ENCODE measurements at regions of chr3 and their contacts with region 1.

Region 1: DNA sequence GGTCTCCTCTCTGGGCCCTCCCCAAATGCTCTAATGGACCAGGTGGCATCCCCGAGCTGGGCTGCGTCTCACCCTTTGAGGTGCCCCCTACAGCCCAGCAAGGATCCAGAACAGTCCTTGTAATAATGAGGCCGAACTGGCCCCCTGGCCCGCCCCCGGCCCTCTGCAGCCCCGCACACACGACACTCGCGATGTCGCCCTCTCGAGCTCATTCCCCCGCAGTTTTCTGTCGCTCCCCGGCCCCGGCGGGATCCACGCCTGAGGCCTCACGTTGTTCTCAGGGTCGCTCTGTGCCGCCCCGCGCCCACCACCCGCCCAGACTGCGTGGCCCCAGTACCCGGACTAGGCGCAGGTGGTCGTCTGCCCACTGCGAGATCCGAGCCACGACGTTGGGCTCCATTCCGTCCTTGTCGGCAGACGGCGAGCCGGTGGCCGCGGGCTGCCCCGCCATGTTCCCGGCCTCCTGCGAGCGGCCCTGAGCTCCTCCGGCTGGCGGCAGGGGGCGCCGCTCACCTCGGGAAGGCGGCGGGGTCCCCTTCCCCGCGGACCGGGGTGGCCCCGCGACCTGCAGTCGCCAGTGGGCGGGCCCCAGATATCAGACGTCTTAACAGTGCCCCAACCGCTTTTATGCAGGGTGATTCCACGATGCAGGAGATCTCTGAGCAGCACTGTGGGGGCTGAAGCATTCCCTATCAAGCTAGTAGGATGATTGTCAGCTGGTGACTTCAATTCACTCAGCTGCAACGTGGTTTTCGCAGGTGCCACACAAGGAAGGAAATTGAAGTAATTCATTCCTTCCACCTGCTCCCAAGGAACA is at the start of gene C3orf33:
- DNase-seq: peak; percentile 75
- H3K4me3 Mint-ChIP-seq: peak within 1 kb of the TSS; percentile 81
- H3K27ac Mint-ChIP-seq: peak within 1 kb of the TSS; percentile 15
- H3K4me1 Mint-ChIP-seq: peaks cover 10% of the 10 kb centered on the region
- H3K27me3 Mint-ChIP-seq: peaks cover 14% of the 10 kb centered on the region
- total RNA-seq, gene C3orf33: 0.48 to 0.86 TPM

Region 2: DNA sequence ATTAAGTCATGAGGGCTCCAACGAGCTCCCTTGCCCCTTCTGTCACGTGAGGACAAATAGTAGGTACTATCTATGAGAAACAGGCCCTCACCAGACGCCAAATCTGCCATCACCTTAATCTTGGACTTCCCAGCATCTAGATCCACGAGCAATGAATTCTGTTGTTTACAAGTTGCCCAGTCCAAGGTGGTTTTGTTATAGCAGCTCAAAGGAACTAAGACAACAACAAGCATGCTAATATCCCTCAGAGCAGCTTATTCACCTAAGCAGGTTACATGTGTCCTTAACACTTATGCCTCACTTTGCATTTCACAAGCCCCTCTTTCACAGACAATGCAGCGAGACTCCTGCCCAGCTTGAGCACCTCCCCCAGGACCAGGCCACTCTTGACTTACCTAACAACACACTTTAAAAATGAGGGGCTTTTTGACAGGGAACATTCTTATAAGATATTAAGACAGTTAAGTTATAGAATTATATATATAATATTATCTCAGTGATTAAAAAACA is 280.6 kb before region 1 on chr3:
- CTCF ChIA-PET with region 1: no interaction called
- POLR2A ChIA-PET with region 1: no interaction called
- DNase-seq: no peak
- H3K4me3 Mint-ChIP-seq: no peak overlapping the region
- H3K27ac Mint-ChIP-seq: no peak overlapping the region
- H3K4me1 Mint-ChIP-seq: no peaks in the 10 kb centered on the region
- H3K27me3 Mint-ChIP-seq: no peaks in the 10 kb centered on the region

Region 3: DNA sequence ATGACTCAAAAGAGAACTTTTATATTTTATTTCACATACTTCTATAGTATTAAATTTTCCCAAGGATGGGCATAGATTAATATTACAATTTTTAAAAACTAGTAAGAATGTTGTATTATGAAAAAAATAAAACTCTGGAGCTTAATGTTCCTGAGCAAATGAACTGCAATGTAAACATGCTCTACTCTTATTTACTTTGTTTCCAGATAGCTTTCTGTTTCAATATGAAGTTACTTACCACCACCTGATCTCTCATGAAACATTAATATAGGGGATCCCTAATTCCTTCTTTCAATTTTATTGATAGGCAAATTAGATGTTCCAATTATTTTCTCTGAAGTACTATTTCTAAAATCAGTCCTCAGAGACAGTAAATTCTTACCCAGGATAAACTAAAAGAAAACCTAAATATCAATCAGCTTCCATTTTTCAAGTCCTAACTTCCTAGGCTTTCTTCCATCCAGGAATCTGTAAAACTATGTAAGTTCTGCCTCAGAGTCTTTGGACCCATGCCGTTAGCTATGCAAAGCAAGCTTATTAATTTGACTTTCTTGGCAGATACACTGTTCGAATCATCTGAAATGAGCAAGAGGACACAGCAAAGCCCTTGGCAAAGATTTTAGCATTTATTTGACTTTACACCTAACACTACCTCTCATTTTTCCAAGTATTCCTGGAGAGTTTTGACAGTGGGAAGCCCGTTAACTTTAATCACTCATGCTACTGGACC is 154.4 kb before region 1 on chr3:
- CTCF ChIA-PET with region 1: no interaction called
- POLR2A ChIA-PET with region 1: no interaction called
- DNase-seq: no peak
- H3K4me3 Mint-ChIP-seq: no peak overlapping the region
- H3K27ac Mint-ChIP-seq: no peak overlapping the region
- H3K4me1 Mint-ChIP-seq: no peaks in the 10 kb centered on the region
- H3K27me3 Mint-ChIP-seq: no peaks in the 10 kb centered on the region

Region 4: DNA sequence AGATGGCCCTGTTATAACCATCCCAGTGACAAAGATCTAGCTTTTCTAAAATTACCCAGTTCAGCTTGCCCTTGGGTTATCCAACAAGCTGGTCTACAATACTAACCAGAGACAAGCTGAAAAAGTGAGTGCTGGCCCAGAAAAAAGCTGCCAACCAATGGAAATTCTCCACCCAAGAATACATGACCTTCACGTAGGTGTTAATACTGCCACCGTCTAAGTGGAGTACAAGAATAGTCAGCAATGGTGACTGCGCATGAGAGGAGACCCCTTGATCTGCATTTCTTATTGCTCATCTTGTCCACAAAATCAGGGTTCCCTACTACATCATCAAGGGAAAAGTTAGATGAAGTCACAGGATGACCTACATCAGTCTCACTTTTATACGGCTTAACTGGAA is 45.4 kb before region 1 on chr3:
- CTCF ChIA-PET with region 1: interaction called, 16 read pairs
- POLR2A ChIA-PET with region 1: no interaction called
- DNase-seq: no peak
- H3K4me3 Mint-ChIP-seq: no peak overlapping the region
- H3K27ac Mint-ChIP-seq: no peak overlapping the region
- H3K4me1 Mint-ChIP-seq: peaks cover 1% of the 10 kb centered on the region
- H3K27me3 Mint-ChIP-seq: no peaks in the 10 kb centered on the region

Region 5: GRCh38 chr3:155835341-155836071 is 29.5 kb after region 1 on chr3:
- CTCF ChIA-PET with region 1: interaction called, 15 read pairs
- POLR2A ChIA-PET with region 1: interaction called, 4 read pairs
- DNase-seq: no peak
- H3K4me3 Mint-ChIP-seq: no peak overlapping the region
- H3K27ac Mint-ChIP-seq: no peak overlapping the region
- H3K4me1 Mint-ChIP-seq: peaks cover 8% of the 10 kb centered on the region
- H3K27me3 Mint-ChIP-seq: no peaks in the 10 kb centered on the region

Region 6: DNA sequence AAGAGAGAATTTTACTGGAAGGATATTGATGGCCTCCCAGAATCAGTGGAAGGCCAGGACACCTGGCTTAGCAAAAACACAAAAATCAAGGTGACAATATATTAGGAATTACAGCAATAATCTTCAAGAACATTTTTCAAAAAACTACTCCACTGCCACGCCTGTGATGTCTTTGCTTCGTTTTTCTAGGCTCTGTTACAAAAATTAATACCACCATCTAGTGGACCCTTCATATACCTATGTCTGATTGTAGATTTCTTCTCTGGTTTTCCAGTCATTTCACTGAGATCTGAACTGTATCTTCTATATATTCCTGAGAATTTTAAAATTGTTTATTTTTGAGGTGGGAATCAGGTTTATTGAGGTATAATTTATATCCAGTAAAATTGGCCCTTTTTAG is 53.8 kb after region 1 on chr3:
- CTCF ChIA-PET with region 1: interaction called, 32 read pairs
- POLR2A ChIA-PET with region 1: interaction called, 10 read pairs
- DNase-seq: no peak
- H3K4me3 Mint-ChIP-seq: no peak overlapping the region
- H3K27ac Mint-ChIP-seq: peak overlapping the region; percentile 14
- H3K4me1 Mint-ChIP-seq: peaks cover 44% of the 10 kb centered on the region
- H3K27me3 Mint-ChIP-seq: no peaks in the 10 kb centered on the region

Region 7: GRCh38 chr3:155895379-155895900 is 89.4 kb after region 1 on chr3:
- CTCF ChIA-PET with region 1: interaction called, 26 read pairs
- POLR2A ChIA-PET with region 1: no interaction called
- DNase-seq: no peak
- H3K4me3 Mint-ChIP-seq: no peak overlapping the region
- H3K27ac Mint-ChIP-seq: no peak overlapping the region
- H3K4me1 Mint-ChIP-seq: peaks cover 7% of the 10 kb centered on the region
- H3K27me3 Mint-ChIP-seq: no peaks in the 10 kb centered on the region

Region 8: GRCh38 chr3:155956508-155957445 is 150.8 kb after region 1 on chr3:
- CTCF ChIA-PET with region 1: interaction called, 10 read pairs
- POLR2A ChIA-PET with region 1: no interaction called
- DNase-seq: no peak
- H3K4me3 Mint-ChIP-seq: no peak overlapping the region
- H3K27ac Mint-ChIP-seq: no peak overlapping the region
- H3K4me1 Mint-ChIP-seq: peaks cover 4% of the 10 kb centered on the region
- H3K27me3 Mint-ChIP-seq: no peaks in the 10 kb centered on the region

Measured in activated CD4-positive, alpha-beta memory T cell treated with anti-CD3 and anti-CD28 coated beads, Interleukin-2, amount 10 ng/mL, durations not matched to agents 7 days and 5 days (primary cell).